Right lobe of liver (tissue), 6 donors: ENCODE measurements at regions of chr1 and their contacts with region 1.

Region 1: DNA sequence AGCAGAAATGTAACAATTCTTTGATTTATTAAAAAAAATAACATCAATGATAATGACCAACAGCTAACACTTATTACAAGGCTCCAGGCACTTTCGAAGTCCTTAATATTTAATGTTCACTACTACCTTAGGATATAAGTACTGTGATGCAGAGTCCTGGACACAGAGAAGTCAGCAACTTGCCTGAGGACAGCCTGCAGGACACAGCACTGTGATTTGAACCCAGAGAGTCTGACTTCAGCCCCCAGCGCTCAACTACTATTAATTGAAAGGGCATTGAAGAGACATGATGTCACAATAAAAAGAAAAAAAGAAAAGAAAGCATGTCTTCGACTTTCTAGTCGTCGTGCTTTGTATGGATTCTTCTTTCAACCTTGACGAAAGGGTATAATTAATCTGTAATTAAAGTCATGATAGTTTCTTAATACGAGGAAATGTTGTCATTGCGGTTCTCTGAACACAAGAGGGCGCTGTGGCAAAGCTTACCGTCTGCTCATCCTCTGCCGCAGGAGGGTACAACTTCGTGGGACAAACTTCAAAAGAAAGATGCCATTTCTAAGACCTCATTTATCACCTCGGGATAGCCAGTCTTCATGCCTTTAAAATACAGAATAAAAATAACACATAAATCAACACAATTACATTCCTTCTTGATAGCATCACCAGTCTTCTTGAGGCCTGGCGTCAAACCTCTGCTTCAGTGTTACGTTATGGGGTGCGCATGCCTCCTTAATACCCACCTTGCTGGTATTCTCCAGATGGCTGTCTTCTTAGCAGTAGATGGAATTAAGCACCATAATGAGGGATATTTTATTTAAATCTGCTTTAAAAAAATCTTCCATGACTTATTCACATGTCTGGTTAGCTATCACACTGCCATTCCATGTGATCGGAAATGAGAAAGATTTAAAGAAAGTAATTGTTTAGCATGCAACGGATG is 240.1 kb downstream of the DISC1 start:
- DNase-seq: peak in 2 of 3 donors; percentile 34 to 56
- ATAC-seq: peak; percentile 51 to 77 (median 72)
- H3K4me3 ChIP-seq: no peak overlapping the region
- H3K27ac ChIP-seq: no peak overlapping the region
- H3K4me1 ChIP-seq: no peaks in the 10 kb centered on the region
- H3K27me3 ChIP-seq: no peaks in the 10 kb centered on the region
- CTCF ChIP-seq: peak; percentile 71 to 88 (median 84)
- POLR2A ChIP-seq: no peak

Region 2: DNA sequence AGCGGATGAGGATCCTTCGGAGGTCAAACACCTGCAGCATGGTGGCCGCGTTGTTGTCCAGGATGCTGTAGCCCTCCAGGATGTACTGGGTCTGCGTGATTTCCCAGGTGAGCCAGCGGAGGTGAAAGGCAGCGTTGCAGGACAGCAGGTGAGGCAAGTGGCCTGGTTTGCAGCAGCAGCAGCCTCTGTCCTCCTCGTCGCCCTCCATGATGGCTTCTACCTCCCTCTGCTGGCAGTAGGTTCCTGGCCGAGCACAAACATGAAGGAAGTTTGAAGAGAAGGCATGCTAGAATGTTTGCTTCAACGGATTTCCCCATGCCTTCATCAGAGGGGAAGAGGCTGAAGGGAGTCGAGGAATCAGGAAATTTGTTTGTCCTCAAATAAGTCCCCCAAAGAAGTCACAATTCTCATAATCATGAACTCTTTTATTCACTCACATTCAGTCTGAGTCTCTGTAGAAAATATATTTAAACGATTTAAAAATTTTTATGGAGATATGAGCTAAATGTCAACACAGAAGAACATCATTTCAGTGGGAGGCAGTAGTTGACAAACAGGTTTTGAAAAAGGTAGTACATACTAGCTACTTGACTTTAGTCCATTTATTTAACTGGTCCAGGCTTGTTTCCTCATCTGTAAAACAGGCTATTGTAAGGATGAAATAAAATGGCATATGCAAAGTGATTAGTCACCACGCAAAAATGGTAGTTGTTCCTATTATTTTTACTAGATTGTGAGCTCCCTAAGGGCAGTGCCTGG is 1158.7 kb after region 1 on chr1:
- intact Hi-C with region 1: loop called in 1 of 2 experiments (anchors 10 kb)
- DNase-seq: peak; percentile 52 to 60 (median 54)
- ATAC-seq: peak; percentile 72 to 94 (median 85)
- H3K4me3 ChIP-seq: no peak overlapping the region
- H3K27ac ChIP-seq: no peak overlapping the region
- H3K4me1 ChIP-seq: no peaks in the 10 kb centered on the region
- H3K27me3 ChIP-seq: no peaks in the 10 kb centered on the region
- CTCF ChIP-seq: peak; percentile 41 to 55 (median 45)
- POLR2A ChIP-seq: no peak